A673 (cell line): ENCODE measurements at regions of chr5 and their contacts with region 1.

Region 1: GRCh38 chr5:90886381-90886780 is 327.8 kb downstream of the ADGRV1 start:
- DNase-seq: no peak
- H3K4me3 ChIP-seq: no peak overlapping the region
- H3K27ac ChIP-seq: no peak overlapping the region
- H3K4me1 ChIP-seq: no peaks in the 10 kb centered on the region
- H3K27me3 ChIP-seq: no peaks in the 10 kb centered on the region
- CTCF ChIP-seq: no peak

Region 2: GRCh38 chr5:90932052-90932699 is 45.8 kb after region 1 on chr5:
- CTCF ChIA-PET with region 1: no interaction called
- POLR2A ChIA-PET with region 1: no interaction called
- intact Hi-C with region 1: no loop called
- DNase-seq: peak; percentile 82
- H3K4me3 ChIP-seq: no peak overlapping the region
- H3K27ac ChIP-seq: peak overlapping the region; percentile 2
- H3K4me1 ChIP-seq: peaks cover 11% of the 10 kb centered on the region
- H3K27me3 ChIP-seq: no peaks in the 10 kb centered on the region
- CTCF ChIP-seq: peak; percentile 85

Region 3: GRCh38 chr5:91150189-91150588 is 263.8 kb after region 1 on chr5:
- CTCF ChIA-PET with region 1: interaction called, 10 read pairs
- POLR2A ChIA-PET with region 1: no interaction called
- intact Hi-C with region 1: no loop called
- DNase-seq: no peak
- H3K4me3 ChIP-seq: no peak overlapping the region
- H3K27ac ChIP-seq: peak overlapping the region; percentile 38
- H3K4me1 ChIP-seq: peaks cover 45% of the 10 kb centered on the region
- H3K27me3 ChIP-seq: no peaks in the 10 kb centered on the region
- CTCF ChIP-seq: no peak